ENCODE measurements at regions of chr3 and their contacts with region 1.

Region 1: GRCh38 chr3:134308350-134308891 is 57.8 kb upstream of the RYK start:
- DNase-seq: peak; percentile 88
- H3K4me3 ChIP-seq: no peak overlapping the region
- H3K27ac ChIP-seq: peak overlapping the region; percentile 77 to 87 (median 82)
- H3K4me1 ChIP-seq: peaks cover 7 to 46% (median 23%) of the 10 kb centered on the region in 4 donors
- H3K27me3 ChIP-seq: no peaks in the 10 kb centered on the region
- CTCF ChIP-seq: peak; percentile 99 to 100 (median 100)
- EP300 ChIP-seq: no peak
- POLR2A ChIP-seq: no peak

Region 2: GRCh38 chr3:134201201-134202130 is 107.0 kb before region 1 on chr3:
- in situ Hi-C with region 1: loop called in 1 of 4 experiments (anchors 5 kb)
- intact Hi-C with region 1: no loop called
- DNase-seq: no peak
- H3K4me3 ChIP-seq: no peak overlapping the region
- H3K27ac ChIP-seq: no peak overlapping the region
- H3K4me1 ChIP-seq: no peaks in the 10 kb centered on the region
- H3K27me3 ChIP-seq: no peaks in the 10 kb centered on the region
- CTCF ChIP-seq: no peak
- EP300 ChIP-seq: no peak
- POLR2A ChIP-seq: no peak

Region 3: DNA sequence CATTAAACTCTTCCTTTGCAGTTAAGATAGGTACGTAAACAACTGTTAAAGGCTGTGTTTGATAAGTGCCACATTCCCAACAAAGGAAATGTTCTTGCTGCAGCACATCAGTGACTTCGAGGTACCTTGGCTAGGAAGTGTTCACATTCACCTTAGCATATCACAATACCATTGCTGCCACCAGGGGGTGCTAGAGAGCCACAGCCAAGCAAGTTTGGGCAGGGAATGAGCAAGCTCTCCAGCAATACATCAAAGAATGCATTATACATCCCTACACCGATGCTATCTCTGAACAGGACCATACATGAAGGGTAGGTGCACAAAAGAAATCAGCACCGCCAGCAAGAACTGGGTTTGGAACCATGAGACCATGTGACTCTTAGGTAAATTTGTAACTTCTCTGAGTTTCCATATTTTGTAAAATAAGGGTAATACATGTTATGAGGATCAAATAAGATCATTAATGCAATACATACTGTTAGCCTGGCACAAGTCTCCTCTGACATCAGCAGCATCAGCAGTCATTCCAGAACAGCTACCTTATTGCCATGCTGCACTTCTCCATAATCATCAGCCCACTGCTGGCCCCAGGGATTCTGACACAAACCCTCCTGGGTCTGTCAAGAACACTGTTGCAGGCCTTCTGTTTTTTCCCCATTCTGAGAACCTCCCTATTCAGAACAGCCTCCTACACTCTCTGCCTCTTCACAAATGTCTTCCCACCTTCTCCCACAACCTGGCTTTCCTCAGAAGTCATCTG is 95.3 kb before region 1 on chr3:
- in situ Hi-C with region 1: loop called in 3 of 4 experiments (anchors 5 to 10 kb)
- intact Hi-C with region 1: no loop called
- DNase-seq: peak; percentile 87
- H3K4me3 ChIP-seq: no peak overlapping the region
- H3K27ac ChIP-seq: no peak overlapping the region
- H3K4me1 ChIP-seq: peaks cover 0 to 3% (median 0%) of the 10 kb centered on the region in 4 donors
- H3K27me3 ChIP-seq: no peaks in the 10 kb centered on the region
- CTCF ChIP-seq: peak; percentile 91 to 99 (median 98)
- EP300 ChIP-seq: no peak
- POLR2A ChIP-seq: no peak

Region 4: GRCh38 chr3:134250717-134251220 is 57.7 kb before region 1 on chr3 and contains the start of gene RYK:
- in situ Hi-C with region 1: no loop called
- intact Hi-C with region 1: no loop called
- DNase-seq: peak; percentile 86
- H3K4me3 ChIP-seq: peak within 1 kb of the TSS; percentile 78 to 97 (median 86)
- H3K27ac ChIP-seq: peak within 1 kb of the TSS; percentile 90 to 95 (median 92)
- H3K4me1 ChIP-seq: peaks cover 7 to 46% (median 18%) of the 10 kb centered on the region in 4 donors
- H3K27me3 ChIP-seq: no peaks in the 10 kb centered on the region
- CTCF ChIP-seq: no peak
- EP300 ChIP-seq: no peak
- POLR2A ChIP-seq: peak; percentile 50
- total RNA-seq, gene RYK: 20.2 to 91.1 (median 61.6) TPM

Region 5: GRCh38 chr3:134364061-134364935 is 55.9 kb after region 1 on chr3:
- in situ Hi-C with region 1: loop called in 1 of 4 experiments (anchors 10 kb)
- intact Hi-C with region 1: no loop called
- DNase-seq: peak; percentile 90
- H3K4me3 ChIP-seq: peak overlapping the region; percentile 5 to 38 (median 18)
- H3K27ac ChIP-seq: peak overlapping the region; percentile 76 to 99 (median 96)
- H3K4me1 ChIP-seq: peaks cover 22 to 72% (median 39%) of the 10 kb centered on the region in 4 donors
- H3K27me3 ChIP-seq: no peaks in the 10 kb centered on the region
- CTCF ChIP-seq: no peak
- EP300 ChIP-seq: no peak
- POLR2A ChIP-seq: no peak

Region 6: DNA sequence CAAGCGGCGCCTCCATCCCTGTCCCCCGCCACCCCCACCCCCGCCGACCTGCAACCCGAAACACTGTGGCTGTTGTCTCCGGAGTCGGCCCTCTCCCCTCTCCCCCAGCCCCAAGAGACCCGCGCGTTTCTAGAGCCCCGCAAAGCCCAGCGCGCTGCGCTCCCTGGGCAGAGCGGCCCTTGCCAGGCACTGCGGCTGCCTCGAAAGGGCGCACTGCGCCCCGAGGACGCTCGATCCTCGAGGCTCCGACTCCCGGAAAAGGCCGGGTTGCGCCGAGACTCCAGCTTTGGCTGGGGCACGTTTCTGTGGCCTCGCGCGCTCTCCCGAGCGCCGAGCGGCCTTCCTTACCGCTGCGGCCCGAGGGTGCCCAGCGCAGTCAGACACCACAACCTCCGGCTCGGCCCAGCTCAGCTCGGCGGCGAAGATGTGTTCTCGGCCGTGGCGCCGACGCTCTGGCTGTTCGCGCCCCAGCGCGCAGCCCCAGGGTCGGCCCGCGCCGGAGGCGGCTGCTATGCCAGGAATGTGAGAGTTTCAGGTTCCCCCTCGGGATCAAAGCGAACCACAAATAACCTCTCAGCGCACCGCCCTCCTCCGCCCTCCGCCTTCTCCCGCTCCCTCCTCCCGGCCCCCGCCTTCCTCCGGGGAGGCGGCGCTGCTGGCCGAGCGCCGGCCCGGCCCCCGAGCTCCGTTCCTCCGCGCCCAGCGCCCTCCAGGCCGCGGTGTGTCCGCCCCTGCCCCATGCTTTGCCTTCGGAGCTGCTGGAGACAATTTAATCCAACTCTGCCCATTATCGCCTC is 65.8 kb after region 1 on chr3 and contains the start of gene AMOTL2:
- in situ Hi-C with region 1: loop called in 2 of 4 experiments (anchors 5 to 10 kb)
- intact Hi-C with region 1: loop called (anchors 5 kb)
- DNase-seq: peak; percentile 83
- H3K4me3 ChIP-seq: peak within 1 kb of the TSS; percentile 45 to 70 (median 64)
- H3K27ac ChIP-seq: peak within 1 kb of the TSS; percentile 96 to 99 (median 98)
- H3K4me1 ChIP-seq: peaks cover 37 to 62% (median 52%) of the 10 kb centered on the region in 4 donors
- H3K27me3 ChIP-seq: peaks cover 2% of the 10 kb centered on the region
- CTCF ChIP-seq: no peak
- EP300 ChIP-seq: no peak
- POLR2A ChIP-seq: peak; percentile 91
- total RNA-seq, gene AMOTL2: 14.5 to 50.9 (median 23.8) TPM

Region 7: DNA sequence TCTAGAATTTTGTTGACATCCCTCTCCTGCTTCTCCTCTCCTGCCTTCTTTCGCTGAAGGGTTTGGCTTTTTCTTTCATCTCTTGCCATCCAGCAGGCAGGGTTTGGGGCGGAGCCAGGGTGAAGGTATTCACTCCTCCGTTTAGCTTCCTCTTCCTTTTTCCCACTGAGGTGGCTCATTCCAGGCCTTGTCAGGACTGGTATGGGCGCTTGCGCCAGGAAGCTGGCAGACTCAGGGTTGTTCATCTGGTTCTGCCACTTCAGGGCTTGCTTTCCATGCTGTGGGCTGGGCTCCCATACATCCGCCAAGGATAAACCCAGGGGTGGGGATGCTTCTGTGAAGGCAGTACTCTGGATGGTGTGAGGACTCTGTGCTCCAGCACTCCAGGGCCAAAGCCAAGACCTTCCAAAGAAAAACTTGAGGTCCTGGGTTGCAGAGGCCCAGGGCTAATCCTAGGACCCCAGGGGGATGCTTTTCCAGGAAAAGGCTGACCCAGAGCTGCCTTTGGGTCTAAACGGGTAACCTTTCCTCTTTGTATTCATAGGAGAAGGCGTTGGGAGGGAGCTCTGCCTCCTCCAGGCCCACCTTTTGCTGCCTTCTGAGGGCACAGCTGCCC is 73.5 kb after region 1 on chr3:
- in situ Hi-C with region 1: loop called in 2 of 4 experiments (anchors 5 to 10 kb)
- intact Hi-C with region 1: no loop called
- DNase-seq: peak; percentile 88
- H3K4me3 ChIP-seq: no peak overlapping the region
- H3K27ac ChIP-seq: peak overlapping the region; percentile 60 to 64 (median 64)
- H3K4me1 ChIP-seq: peaks cover 3 to 14% (median 8%) of the 10 kb centered on the region in 4 donors
- H3K27me3 ChIP-seq: no peaks in the 10 kb centered on the region
- CTCF ChIP-seq: no peak
- EP300 ChIP-seq: no peak
- POLR2A ChIP-seq: no peak

Region 8: GRCh38 chr3:134395103-134395502 is 86.7 kb after region 1 on chr3:
- in situ Hi-C with region 1: no loop called
- intact Hi-C with region 1: no loop called
- DNase-seq: no peak
- H3K4me3 ChIP-seq: no peak overlapping the region
- H3K27ac ChIP-seq: no peak overlapping the region
- H3K4me1 ChIP-seq: no peaks in the 10 kb centered on the region
- H3K27me3 ChIP-seq: peaks cover 6% of the 10 kb centered on the region
- CTCF ChIP-seq: no peak
- EP300 ChIP-seq: no peak
- POLR2A ChIP-seq: no peak

Region 9: GRCh38 chr3:134473868-134474546 is 165.6 kb after region 1 on chr3:
- in situ Hi-C with region 1: loop called (anchors 5 to 10 kb)
- intact Hi-C with region 1: loop called (anchors 2 kb)
- DNase-seq: peak; percentile 77
- H3K4me3 ChIP-seq: no peak overlapping the region
- H3K27ac ChIP-seq: no peak overlapping the region
- H3K4me1 ChIP-seq: peaks cover 0 to 3% (median 0%) of the 10 kb centered on the region in 4 donors
- H3K27me3 ChIP-seq: no peaks in the 10 kb centered on the region
- CTCF ChIP-seq: peak; percentile 80 to 88 (median 82)
- EP300 ChIP-seq: no peak
- POLR2A ChIP-seq: no peak

Region 10: DNA sequence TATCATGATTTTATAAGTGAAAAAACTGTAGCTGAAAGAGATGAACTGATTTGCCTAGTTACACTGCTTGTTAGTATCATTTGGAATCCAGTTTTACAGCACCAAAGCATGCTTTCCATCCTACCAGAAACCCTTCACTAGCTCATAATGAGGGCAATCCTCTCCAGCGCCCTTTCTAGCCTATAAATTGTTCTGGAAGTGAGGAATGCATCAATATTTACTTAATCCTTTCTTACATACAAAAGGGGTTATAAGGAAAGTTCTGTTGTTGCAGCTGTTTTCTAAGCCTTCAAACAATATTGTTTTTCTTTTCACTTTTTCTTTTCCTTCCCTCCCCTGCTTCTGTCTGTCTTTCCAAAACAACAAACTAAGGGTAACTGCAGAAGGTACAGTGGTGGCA is 1930.7 kb after region 1 on chr3:
- in situ Hi-C with region 1: no loop called
- intact Hi-C with region 1: no loop called
- DNase-seq: no peak
- H3K4me3 ChIP-seq: no peak overlapping the region
- H3K27ac ChIP-seq: no peak overlapping the region
- H3K4me1 ChIP-seq: peaks cover 0 to 7% (median 0%) of the 10 kb centered on the region in 4 donors
- H3K27me3 ChIP-seq: no peaks in the 10 kb centered on the region
- CTCF ChIP-seq: no peak
- EP300 ChIP-seq: no peak
- POLR2A ChIP-seq: no peak

Measured in transverse colon (tissue), 4 donors.